Aorta (tissue), 5 donors: ENCODE measurements at regions of chr4 and their contacts with region 1.

Region 1: DNA sequence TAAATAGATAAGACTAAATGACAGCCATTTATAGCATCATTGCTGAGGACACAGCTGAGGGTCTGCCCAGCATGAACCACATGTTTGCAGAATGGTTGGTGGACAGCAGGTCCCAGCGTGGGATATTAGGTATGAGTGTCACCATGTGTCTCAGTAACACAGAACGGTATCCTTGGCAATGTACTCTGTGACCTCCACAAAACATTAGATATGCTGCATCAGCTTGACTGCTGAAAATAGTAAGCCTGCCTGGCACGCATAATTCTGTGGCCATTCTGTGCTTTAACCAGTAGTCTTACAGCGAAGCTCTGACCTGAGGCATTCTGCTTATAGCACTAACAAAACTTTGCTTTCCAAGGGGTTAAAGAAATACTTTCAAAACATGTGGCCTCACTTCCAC is 32.0 kb downstream of the LIMCH1 start:
- DNase-seq: peak in 1 of 2 donors; percentile 42
- ATAC-seq: peak; percentile 68
- H3K4me3 ChIP-seq: no peak overlapping the region
- H3K27ac ChIP-seq: peak overlapping the region in 1 of 2 donors; percentile 25
- H3K4me1 ChIP-seq: peaks cover 7 to 16% of the 10 kb centered on the region in 2 donors
- H3K27me3 ChIP-seq: no peaks in the 10 kb centered on the region

Region 2: GRCh38 chr4:41600243-41600912 is 30.4 kb after region 1 on chr4:
- intact Hi-C with region 1: no loop called
- DNase-seq: no peak
- ATAC-seq: no peak
- H3K4me3 ChIP-seq: no peak overlapping the region
- H3K27ac ChIP-seq: no peak overlapping the region
- H3K4me1 ChIP-seq: peaks cover 1 to 10% of the 10 kb centered on the region in 2 donors
- H3K27me3 ChIP-seq: no peaks in the 10 kb centered on the region

Region 3: GRCh38 chr4:41611881-41612871 is 42.2 kb after region 1 on chr4:
- intact Hi-C with region 1: loop called in 1 of 2 experiments (anchors 5 kb)
- DNase-seq: peak in 1 of 2 donors; percentile 63
- ATAC-seq: peak; percentile 78
- H3K4me3 ChIP-seq: no peak overlapping the region
- H3K27ac ChIP-seq: peak overlapping the region in 1 of 2 donors; percentile 21
- H3K4me1 ChIP-seq: peaks cover 0 to 12% of the 10 kb centered on the region in 2 donors
- H3K27me3 ChIP-seq: no peaks in the 10 kb centered on the region

Region 4: DNA sequence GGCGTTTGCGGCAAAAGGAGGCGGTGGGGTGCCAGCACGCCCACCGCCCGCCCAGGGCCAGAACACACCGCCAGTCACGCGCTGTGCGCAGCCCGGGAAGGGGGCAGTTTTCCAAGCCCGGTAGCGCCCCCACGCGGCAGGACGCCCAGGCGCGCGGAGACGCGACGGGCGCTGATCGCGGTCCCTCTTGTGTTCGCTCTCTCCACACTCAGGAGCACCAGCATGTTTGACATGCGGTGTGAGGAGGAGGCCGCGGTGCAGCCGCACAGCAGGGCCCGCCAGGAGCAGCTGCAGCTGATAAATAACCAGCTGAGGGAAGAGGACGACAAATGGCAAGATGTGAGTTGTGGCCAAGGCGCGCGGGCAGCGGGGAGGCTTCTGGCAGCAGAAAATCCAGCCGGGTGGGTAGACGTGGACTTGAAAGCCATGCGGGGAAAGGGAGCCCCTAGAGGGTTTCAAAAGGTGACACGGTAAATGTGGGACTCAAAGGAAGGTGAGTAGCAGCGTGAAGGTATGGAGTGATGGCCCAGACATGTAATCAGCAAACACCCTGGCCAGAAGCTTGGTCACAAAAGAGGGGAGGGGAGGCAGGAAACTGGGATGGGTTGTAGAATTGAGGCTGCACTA is 74.4 kb after region 1 on chr4:
- intact Hi-C with region 1: no loop called
- DNase-seq: peak; percentile 80 to 94
- ATAC-seq: peak; percentile 90
- H3K4me3 ChIP-seq: no peak overlapping the region
- H3K27ac ChIP-seq: no peak overlapping the region
- H3K4me1 ChIP-seq: peaks cover 2 to 3% of the 10 kb centered on the region in 2 donors
- H3K27me3 ChIP-seq: no peaks in the 10 kb centered on the region